H1 (cell line): ENCODE measurements at regions of chr10 and their contacts with region 1.

Region 1: DNA sequence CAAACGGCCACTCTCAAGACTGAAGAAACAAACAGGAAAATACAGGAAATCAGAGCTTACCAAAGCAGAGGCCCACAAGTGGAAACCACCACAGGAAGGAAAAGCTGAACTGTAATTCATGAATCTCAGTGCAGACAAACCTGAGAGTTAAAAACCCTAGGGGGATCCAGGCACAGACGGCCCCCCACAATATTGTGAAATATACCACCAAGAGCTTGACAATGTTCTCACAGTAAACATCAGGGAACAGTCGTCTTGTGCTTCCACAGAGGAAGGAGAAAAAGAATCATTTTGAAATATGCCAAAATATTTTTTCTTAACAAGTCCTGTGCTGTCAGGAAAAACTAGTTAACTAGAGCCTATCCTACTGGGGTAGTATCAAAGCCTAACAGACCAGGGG is 68.2 kb upstream of the NRG3 start:
- DNase-seq: no peak
- H3K4me3 ChIP-seq: no peak overlapping the region
- H3K27ac ChIP-seq: no peak overlapping the region
- H3K4me1 ChIP-seq: no peaks in the 10 kb centered on the region
- H3K27me3 ChIP-seq: no peaks in the 10 kb centered on the region
- CTCF ChIP-seq: no peak
- EP300 ChIP-seq: no peak
- POLR2A ChIP-seq: no peak
- RAD21 ChIP-seq: no peak

Region 2: GRCh38 chr10:81784111-81784597 is 22.7 kb before region 1 on chr10:
- CTCF ChIA-PET with region 1: interaction called, 10 read pairs
- POLR2A ChIA-PET with region 1: no interaction called
- DNase-seq: no peak
- H3K4me3 ChIP-seq: no peak overlapping the region
- H3K27ac ChIP-seq: no peak overlapping the region
- H3K4me1 ChIP-seq: no peaks in the 10 kb centered on the region
- H3K27me3 ChIP-seq: no peaks in the 10 kb centered on the region
- CTCF ChIP-seq: no peak
- EP300 ChIP-seq: no peak
- POLR2A ChIP-seq: no peak
- RAD21 ChIP-seq: no peak